T-cell (primary cell): ENCODE measurements at regions of chr6 and their contacts with region 1.

Region 1: DNA sequence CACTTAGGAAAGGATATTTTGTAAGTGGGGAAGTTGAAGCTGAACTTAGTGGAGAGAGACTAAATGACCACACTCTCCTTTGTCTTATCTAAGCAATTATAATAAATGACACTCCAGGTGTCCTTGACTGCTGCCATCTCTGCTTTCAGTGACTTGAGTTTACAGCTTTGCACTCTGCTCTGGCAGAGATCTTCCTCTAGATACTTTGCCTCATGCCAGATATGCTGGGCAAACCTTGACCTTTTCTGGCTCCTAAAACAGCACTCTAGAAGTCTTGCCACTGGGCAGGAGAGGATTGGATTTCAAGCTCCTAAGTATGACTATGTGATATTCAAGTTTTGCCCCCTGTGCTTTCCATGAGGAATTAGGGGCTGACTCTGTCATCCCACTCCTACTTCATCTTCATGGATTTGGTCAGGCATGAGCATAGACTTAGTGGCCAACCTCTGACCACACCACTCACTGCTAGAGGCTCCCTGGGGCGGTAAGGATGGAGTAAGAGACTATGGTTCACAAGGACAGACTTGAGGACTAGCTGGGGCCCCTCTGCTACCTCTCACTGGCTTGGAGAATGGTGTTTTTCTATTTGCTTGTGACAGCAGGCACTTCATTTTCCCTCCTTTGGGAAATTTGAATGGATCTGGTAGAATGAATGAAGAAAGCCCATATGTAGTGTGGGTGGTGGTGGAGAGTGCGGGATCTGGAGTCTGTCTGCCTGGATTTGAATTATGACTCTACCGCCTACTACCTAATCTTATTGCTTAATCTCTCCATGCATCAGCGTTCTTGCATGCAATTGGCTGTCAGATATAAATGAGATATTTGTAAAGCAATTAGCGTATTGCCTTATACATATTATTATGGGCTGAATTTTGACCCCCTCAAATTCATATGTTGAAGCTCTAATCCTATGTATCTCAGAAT is 191.4 kb downstream of the REV3L start:
- DNase-seq: no peak
- ATAC-seq: no peak
- H3K4me3 ChIP-seq: no peak overlapping the region
- H3K4me3 Mint-ChIP-seq: no peak overlapping the region
- H3K27ac ChIP-seq: no peak overlapping the region
- H3K27ac Mint-ChIP-seq: peak overlapping the region in 1 of 2 donors; percentile 70
- H3K4me1 ChIP-seq: peaks cover 3 to 8% of the 10 kb centered on the region in 2 experiments
- H3K4me1 Mint-ChIP-seq: peaks cover 18 to 20% (median 19%) of the 10 kb centered on the region in 3 donors
- H3K27me3 ChIP-seq: no peaks in the 10 kb centered on the region
- H3K27me3 Mint-ChIP-seq: no peaks in the 10 kb centered on the region

Region 2: GRCh38 chr6:111306104-111306888 is 14.7 kb after region 1 on chr6:
- CTCF ChIA-PET with region 1: no interaction called
- POLR2A ChIA-PET with region 1: interaction called in 1 of 2 experiments, 11 read pairs
- DNase-seq: no peak
- ATAC-seq: no peak
- H3K4me3 ChIP-seq: no peak overlapping the region
- H3K4me3 Mint-ChIP-seq: no peak overlapping the region
- H3K27ac ChIP-seq: no peak overlapping the region
- H3K27ac Mint-ChIP-seq: peak overlapping the region in 1 of 2 donors; percentile 8
- H3K4me1 ChIP-seq: no peaks in the 10 kb centered on the region
- H3K4me1 Mint-ChIP-seq: peaks cover 0 to 4% (median 0%) of the 10 kb centered on the region in 3 donors
- H3K27me3 ChIP-seq: no peaks in the 10 kb centered on the region
- H3K27me3 Mint-ChIP-seq: no peaks in the 10 kb centered on the region

Region 3: DNA sequence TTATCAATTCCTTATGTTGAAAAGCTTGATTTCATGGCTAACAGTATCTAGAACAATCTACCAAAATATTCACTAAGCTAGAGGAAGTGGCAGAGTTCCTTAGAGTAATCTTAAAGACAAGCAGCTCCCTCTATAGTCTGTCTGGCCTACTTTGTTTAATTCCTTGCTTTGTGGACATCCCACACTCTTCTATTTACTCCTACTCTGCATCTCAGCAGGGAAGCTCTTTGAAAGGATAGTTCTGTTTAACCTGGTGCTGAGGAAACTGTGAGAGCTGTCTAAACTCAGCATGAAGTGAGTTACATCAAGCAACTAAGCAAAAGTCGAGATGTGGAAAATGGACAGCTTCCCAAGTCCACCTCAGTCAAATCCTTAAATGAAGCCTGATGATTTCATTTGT is 187.2 kb after region 1 on chr6:
- CTCF ChIA-PET with region 1: no interaction called
- POLR2A ChIA-PET with region 1: interaction called, 3 to 10 read pairs
- DNase-seq: peak in 1 of 35 experiments; percentile 63
- ATAC-seq: peak in 2 of 4 experiments; percentile 9 to 20
- H3K4me3 ChIP-seq: no peak overlapping the region
- H3K4me3 Mint-ChIP-seq: no peak overlapping the region
- H3K27ac ChIP-seq: no peak overlapping the region
- H3K27ac Mint-ChIP-seq: peak overlapping the region in 1 of 2 donors; percentile 69
- H3K4me1 ChIP-seq: peaks cover 5 to 8% of the 10 kb centered on the region in 2 experiments
- H3K4me1 Mint-ChIP-seq: peaks cover 39 to 48% (median 44%) of the 10 kb centered on the region in 3 donors
- H3K27me3 ChIP-seq: no peaks in the 10 kb centered on the region
- H3K27me3 Mint-ChIP-seq: no peaks in the 10 kb centered on the region

Region 4: DNA sequence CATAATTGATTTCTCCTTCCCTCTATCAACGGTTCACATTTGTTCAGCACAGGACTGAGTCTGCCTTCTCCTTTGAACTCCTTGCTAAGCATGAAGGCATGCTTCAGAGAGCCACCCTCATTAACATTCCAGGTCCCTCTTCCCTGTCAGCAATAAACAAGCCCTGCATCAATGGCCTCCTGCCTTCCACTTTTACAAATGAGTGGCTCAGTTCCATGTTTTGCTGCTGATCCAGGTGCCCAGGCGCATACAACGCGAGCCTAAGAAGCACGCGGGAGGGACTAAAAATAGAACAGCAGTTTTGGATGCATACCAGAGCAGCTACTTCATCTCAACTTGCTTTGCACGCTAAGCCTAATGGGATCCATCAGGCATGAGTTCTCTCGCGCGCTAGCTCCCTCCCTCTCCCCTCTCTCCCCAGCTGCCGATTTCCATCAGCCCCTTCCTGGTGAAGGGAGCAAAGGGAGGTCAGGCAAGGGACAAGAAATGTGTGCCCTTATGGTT is 260.7 kb after region 1 on chr6:
- CTCF ChIA-PET with region 1: no interaction called
- POLR2A ChIA-PET with region 1: no interaction called
- DNase-seq: no peak
- ATAC-seq: no peak
- H3K4me3 ChIP-seq: no peak overlapping the region
- H3K4me3 Mint-ChIP-seq: no peak overlapping the region
- H3K27ac ChIP-seq: no peak overlapping the region
- H3K27ac Mint-ChIP-seq: no peak overlapping the region
- H3K4me1 ChIP-seq: no peaks in the 10 kb centered on the region
- H3K4me1 Mint-ChIP-seq: peaks cover 0 to 5% (median 2%) of the 10 kb centered on the region in 3 donors
- H3K27me3 ChIP-seq: no peaks in the 10 kb centered on the region
- H3K27me3 Mint-ChIP-seq: no peaks in the 10 kb centered on the region

Region 5: GRCh38 chr6:111888928-111889695 is 597.5 kb after region 1 on chr6:
- CTCF ChIA-PET with region 1: no interaction called
- POLR2A ChIA-PET with region 1: interaction called in 1 of 2 experiments, 12 read pairs
- DNase-seq: no peak
- ATAC-seq: no peak
- H3K4me3 ChIP-seq: no peak overlapping the region
- H3K4me3 Mint-ChIP-seq: no peak overlapping the region
- H3K27ac ChIP-seq: no peak overlapping the region
- H3K27ac Mint-ChIP-seq: no peak overlapping the region
- H3K4me1 ChIP-seq: no peaks in the 10 kb centered on the region
- H3K4me1 Mint-ChIP-seq: no peaks in the 10 kb centered on the region
- H3K27me3 ChIP-seq: no peaks in the 10 kb centered on the region
- H3K27me3 Mint-ChIP-seq: no peaks in the 10 kb centered on the region